Pancreas (tissue), 10 donors: ENCODE measurements at regions of chrX and their contacts with region 1.

Region 1: GRCh38 chrX:39730662-39731397 is 366.9 kb downstream of the BCOR start:
- DNase-seq: peak; percentile 62 to 87 (median 73)
- ATAC-seq: peak; percentile 67 to 88 (median 86)
- H3K4me3 ChIP-seq: no peak overlapping the region
- H3K27ac ChIP-seq: peak overlapping the region in 1 of 4 donors; percentile 17
- H3K4me1 ChIP-seq: peaks cover 0 to 13% (median 10%) of the 10 kb centered on the region in 3 donors
- H3K27me3 ChIP-seq: peaks cover 0 to 5% (median 0%) of the 10 kb centered on the region in 4 donors
- CTCF ChIP-seq: peak in 3 of 4 donors; percentile 24 to 34 (median 30)

Region 2: GRCh38 chrX:39814391-39814790 is 83.6 kb after region 1 on chrX:
- intact Hi-C with region 1: loop called in 1 of 3 experiments (anchors 10 kb)
- DNase-seq: no peak
- ATAC-seq: peak in 3 of 4 donors; percentile 4 to 45 (median 39)
- H3K4me3 ChIP-seq: no peak overlapping the region
- H3K27ac ChIP-seq: peak overlapping the region; percentile 32 to 48 (median 38)
- H3K4me1 ChIP-seq: peaks cover 0 to 5% (median 0%) of the 10 kb centered on the region in 3 donors
- H3K27me3 ChIP-seq: peaks cover 0 to 4% (median 0%) of the 10 kb centered on the region in 4 donors
- CTCF ChIP-seq: peak in 1 of 4 donors; percentile 8

Region 3: GRCh38 chrX:40273356-40274050 is 542.7 kb after region 1 on chrX:
- intact Hi-C with region 1: loop called in 1 of 3 experiments (anchors 10 kb)
- DNase-seq: peak in 1 of 6 donors; percentile 20
- ATAC-seq: peak in 2 of 4 donors; percentile 61 to 74
- H3K4me3 ChIP-seq: no peak overlapping the region
- H3K27ac ChIP-seq: no peak overlapping the region
- H3K4me1 ChIP-seq: no peaks in the 10 kb centered on the region
- H3K27me3 ChIP-seq: peaks cover 0 to 3% (median 0%) of the 10 kb centered on the region in 4 donors
- CTCF ChIP-seq: no peak